Aorta (tissue), 5 donors: ENCODE measurements at regions of chr15 and their contacts with region 1.

Region 1: GRCh38 chr15:40893733-40894688 is at the start of gene VPS18:
- DNase-seq: peak; percentile 99 to 100
- ATAC-seq: peak; percentile 99
- H3K4me3 ChIP-seq: peak within 1 kb of the TSS; percentile 82 to 84
- H3K27ac ChIP-seq: peak within 1 kb of the TSS; percentile 28 to 66
- H3K4me1 ChIP-seq: no peaks in the 10 kb centered on the region
- H3K27me3 ChIP-seq: no peaks in the 10 kb centered on the region
- total RNA-seq, gene VPS18: 18.6 to 22.5 TPM

Region 2: DNA sequence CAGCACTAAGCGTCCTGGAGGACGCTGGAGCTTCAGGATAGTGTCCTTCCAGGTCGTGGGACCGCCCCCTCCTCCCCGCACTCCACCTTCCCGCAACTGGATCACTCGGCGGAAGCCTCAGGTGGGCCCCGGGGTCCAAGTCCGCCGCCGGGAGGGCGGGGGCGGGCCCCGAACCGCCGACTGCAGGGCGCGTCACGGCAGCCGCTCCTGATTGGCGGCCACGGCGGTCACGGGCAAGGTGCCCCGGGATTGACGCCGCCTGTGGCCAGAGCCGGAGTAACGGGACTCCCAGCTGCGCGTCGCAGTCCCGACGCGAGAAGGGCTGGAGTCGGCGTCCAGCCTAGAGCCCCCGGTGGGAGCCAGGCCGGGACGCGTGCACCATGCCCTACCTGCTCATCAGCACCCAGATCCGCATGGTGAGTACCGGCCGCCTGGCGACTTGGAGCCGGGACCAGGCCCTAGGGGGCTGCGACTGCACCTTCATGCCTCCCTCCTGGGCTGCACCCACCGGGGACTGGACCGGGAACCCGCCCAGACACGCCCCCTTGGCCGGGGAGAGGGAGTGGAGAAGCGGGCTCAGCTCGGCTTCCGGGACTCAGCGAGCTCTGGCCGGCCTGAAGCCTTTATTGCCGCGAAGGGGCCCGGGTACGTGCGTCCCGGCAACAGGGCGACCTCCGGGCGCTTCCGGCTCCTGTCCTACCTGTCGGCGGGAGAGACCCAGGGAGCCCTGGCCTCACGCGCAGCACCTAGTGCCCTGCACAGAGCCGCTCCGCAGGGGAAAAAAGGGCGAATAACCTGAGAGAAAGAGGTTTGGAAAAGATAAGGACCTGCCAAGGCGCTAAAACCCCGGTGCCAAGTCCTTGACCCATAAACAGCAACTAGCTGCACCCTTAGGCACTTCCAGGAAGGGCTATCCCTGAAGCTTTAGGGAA is 129.9 kb before region 1 on chr15 and contains the start of gene GCHFR:
- intact Hi-C with region 1: loop called in 1 of 2 experiments (anchors 10 kb)
- DNase-seq: peak; percentile 87 to 93
- ATAC-seq: peak; percentile 85
- H3K4me3 ChIP-seq: peak within 1 kb of the TSS; percentile 7 to 57
- H3K27ac ChIP-seq: peak within 1 kb of the TSS in 1 of 2 donors; percentile 74
- H3K4me1 ChIP-seq: no peaks in the 10 kb centered on the region
- H3K27me3 ChIP-seq: no peaks in the 10 kb centered on the region
- total RNA-seq, gene GCHFR: 4.5 to 7.7 TPM

Region 3: DNA sequence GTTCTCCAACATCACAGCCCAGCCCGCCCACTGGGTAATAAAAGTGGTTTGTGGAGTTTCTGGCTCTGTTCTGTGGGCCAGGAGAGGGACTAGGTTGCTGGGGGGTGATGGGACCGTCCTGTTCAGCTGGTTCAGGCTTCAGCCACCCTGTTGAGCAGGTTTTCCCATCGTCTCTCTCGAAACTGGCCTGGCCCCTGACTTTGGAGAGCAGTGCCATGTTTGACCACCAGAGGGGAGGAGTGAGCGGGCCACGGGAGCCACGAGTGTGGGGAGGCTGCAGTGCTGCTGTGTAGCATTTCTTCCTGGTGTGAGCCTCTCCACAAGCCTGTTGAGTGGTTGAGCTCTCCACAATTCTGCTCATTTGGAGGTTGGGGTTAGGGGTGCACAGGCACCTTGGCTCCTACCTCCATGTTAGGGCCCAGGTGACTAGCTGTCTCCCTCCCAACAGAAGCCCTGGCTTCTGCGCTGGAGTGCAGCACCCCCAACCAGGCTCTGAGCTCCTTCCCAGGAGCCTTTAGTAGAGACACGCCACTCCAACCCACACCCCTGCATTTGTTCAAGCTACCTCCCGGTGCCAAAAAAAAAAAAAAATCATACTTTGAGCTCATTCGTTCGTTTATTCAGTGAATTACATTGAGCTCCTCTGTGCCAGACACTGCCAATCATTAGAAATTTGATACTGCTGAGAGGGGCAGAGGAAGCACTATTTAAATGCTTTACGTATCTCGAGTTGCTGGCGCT is 36.2 kb before region 1 on chr15:
- intact Hi-C with region 1: loop called (anchors 2 kb)
- DNase-seq: peak; percentile 80 to 91
- ATAC-seq: peak; percentile 84
- H3K4me3 ChIP-seq: no peak overlapping the region
- H3K27ac ChIP-seq: no peak overlapping the region
- H3K4me1 ChIP-seq: no peaks in the 10 kb centered on the region
- H3K27me3 ChIP-seq: no peaks in the 10 kb centered on the region

Region 4: DNA sequence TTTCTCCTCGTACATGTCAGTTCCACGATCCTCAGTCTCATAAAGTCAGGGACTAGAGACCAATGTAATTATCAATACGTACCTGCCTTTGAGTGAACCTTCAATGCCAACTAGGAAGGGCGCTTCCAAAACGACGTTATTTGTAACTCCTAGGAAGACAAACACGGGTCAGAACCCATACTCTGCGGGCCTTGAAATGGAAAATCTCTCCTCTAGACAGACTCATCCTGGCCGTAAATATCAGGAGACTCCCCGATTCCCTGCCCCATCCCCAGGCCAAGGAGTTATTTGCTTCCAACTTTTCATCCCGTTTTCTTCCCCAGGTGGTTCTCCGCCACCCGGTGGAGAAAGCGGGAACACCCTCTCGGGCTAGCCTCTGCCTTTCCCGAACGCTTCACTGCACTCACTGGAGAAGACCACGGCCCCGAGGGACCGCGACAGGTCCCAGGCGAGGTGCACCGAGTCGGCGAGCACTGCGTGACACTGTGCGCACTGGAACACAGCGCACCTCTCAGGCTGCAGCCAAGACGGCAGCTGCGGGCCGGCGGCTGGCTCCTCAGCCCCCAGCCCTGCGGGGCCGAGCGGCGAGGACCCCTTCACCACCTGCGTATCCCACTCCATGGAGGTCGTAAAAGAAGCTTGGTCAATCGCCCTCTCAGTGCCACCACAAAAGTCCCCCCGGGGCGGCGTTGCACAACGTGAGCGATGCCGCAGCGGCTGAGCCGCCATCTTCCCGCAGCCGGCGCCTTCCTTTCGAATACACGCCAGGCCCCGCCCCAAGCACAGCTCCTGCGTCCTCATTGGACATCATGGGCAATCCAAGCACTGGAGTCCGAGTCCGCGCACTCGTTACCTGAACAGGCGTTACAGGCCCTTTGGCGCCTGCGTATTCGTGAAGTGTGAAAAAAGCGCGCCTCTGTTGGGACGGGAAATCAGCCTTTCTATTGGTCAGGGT is 438.1 kb after region 1 on chr15 and contains the start of gene OIP5:
- intact Hi-C with region 1: loop called in 1 of 2 experiments (anchors 10 kb)
- DNase-seq: peak; percentile 98 to 99
- ATAC-seq: peak; percentile 99
- H3K4me3 ChIP-seq: peak within 1 kb of the TSS; percentile 50 to 80
- H3K27ac ChIP-seq: no peak within 1 kb of the TSS
- H3K4me1 ChIP-seq: peaks cover 0 to 6% of the 10 kb centered on the region in 2 donors
- H3K27me3 ChIP-seq: no peaks in the 10 kb centered on the region
- total RNA-seq, gene OIP5: 0.51 TPM in 1 of 2 donors, not detected in the other